ENCODE measurements at regions of chr2 and their contacts with region 1.

Region 1: DNA sequence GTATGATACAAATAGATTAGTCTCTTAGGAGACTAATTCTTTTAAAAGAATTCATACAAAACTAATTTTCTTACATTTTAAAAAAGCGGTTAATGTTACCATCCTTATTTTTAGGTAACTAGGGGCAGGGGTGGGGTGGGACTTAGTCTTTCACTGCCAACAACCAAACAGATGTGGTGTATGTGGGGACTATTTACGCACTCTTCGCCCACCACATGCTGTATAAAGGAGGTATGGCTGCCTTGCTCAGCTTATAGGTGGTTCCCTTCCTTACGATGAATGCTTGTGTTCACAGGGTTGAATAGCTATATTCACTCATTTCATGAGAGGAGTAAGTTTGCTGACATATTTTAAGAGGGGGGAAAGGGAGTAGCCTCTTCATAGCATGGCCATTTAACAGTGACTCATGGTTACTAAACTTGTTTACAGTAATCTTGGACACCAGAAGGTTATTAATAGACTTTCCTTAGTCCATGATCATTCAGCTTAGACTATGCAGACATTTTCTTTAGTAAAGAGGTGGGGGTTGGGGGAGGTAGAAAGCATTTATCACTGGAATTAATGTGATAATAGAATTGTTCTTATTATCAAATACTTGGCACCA is 61.8 kb downstream of the CAB39 start:
- DNase-seq: no peak
- H3K4me3 Mint-ChIP-seq: no peak overlapping the region
- H3K27ac Mint-ChIP-seq: no peak overlapping the region
- H3K4me1 Mint-ChIP-seq: peaks cover 80% of the 10 kb centered on the region
- H3K27me3 Mint-ChIP-seq: no peaks in the 10 kb centered on the region

Region 2: GRCh38 chr2:230738391-230738811 is 36.0 kb before region 1 on chr2:
- intact Hi-C with region 1: loop called (anchors 5 kb)
- DNase-seq: no peak
- H3K4me3 Mint-ChIP-seq: no peak overlapping the region
- H3K27ac Mint-ChIP-seq: peak overlapping the region; percentile 78
- H3K4me1 Mint-ChIP-seq: peaks cover 63% of the 10 kb centered on the region
- H3K27me3 Mint-ChIP-seq: no peaks in the 10 kb centered on the region

Region 3: GRCh38 chr2:230758566-230759480 is 15.6 kb before region 1 on chr2:
- intact Hi-C with region 1: loop called (anchors 2 kb)
- DNase-seq: no peak
- H3K4me3 Mint-ChIP-seq: no peak overlapping the region
- H3K27ac Mint-ChIP-seq: peak overlapping the region; percentile 54
- H3K4me1 Mint-ChIP-seq: peaks cover 61% of the 10 kb centered on the region
- H3K27me3 Mint-ChIP-seq: no peaks in the 10 kb centered on the region

Measured in activated T-helper 2 cell treated with anti-CD3 and anti-CD28 coated beads, Interferon-gamma antibody, Interleukin-2, Interleukin-4, amounts not matched to agents 10 μg/mL and 5 μg/mL and 100 μg/mL, durations not matched to agents 14 hours and 24 hours and 36 hours (primary cell).